ENCODE measurements at regions of chr4 and their contacts with region 1.

Region 1: DNA sequence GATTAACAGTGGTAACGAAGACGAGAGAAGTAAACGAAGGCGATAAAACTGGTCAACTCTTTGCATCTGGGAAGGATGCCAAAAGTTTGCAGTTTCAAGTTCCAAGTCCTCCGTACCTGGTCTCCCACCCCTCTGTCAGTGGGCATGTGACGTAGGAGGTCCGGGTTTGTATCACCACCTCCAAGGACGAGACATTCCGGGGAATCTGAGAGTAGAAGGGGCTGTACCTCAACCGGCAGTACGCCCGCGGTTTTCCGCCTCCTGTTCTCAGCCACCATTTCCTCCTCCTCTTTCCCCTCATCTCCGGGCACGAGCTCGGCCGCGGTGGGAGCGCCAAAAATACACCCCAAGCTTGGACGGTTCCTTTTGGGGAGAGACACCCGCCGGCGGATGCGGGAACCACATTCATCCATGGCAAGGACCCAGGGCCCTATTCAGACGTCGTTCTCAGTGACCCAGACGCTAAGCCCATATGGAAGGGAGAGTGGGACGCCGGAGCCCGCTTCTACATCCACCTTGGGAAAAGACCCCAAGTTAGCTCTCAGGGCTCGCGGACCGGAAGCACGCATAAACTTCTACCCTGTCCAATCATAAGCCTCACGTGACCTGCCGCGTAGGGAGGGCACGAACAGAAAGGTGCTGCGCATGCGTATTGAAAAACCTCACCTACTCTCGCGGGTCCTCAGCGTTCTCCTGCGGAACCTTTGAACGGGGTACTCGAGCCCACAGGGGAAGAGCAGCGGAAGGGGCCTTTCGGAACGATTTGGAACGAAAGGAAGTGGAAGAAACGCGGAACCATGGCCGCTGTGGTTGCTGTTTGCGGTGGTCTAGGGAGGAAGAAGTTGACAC is at the starts of genes HELQ and MRPS18C:
- DNase-seq: peak; percentile 89
- ATAC-seq: peak; percentile 92
- H3K4me3 Mint-ChIP-seq: peak within 1 kb of the TSS; percentile 100
- H3K27ac Mint-ChIP-seq: peak within 1 kb of the TSS; percentile 100
- H3K4me1 Mint-ChIP-seq: peaks cover 37% of the 10 kb centered on the region
- H3K27me3 Mint-ChIP-seq: no peaks in the 10 kb centered on the region
- total RNA-seq, gene HELQ: 27.4 to 28.7 TPM
- total RNA-seq, gene MRPS18C: 53.6 to 60.4 TPM

Region 2: GRCh38 chr4:83150653-83151330 is 304.7 kb before region 1 on chr4:
- POLR2A ChIA-PET with region 1: no interaction called
- DNase-seq: no peak
- ATAC-seq: no peak
- H3K4me3 Mint-ChIP-seq: no peak overlapping the region
- H3K27ac Mint-ChIP-seq: no peak overlapping the region
- H3K4me1 Mint-ChIP-seq: peaks cover 22% of the 10 kb centered on the region
- H3K27me3 Mint-ChIP-seq: no peaks in the 10 kb centered on the region

Region 3: GRCh38 chr4:83387753-83388676 is 67.5 kb before region 1 on chr4:
- POLR2A ChIA-PET with region 1: no interaction called
- DNase-seq: no peak
- ATAC-seq: peak; percentile 98
- H3K4me3 Mint-ChIP-seq: peak overlapping the region; percentile 31
- H3K27ac Mint-ChIP-seq: peak overlapping the region; percentile 75
- H3K4me1 Mint-ChIP-seq: peaks cover 9% of the 10 kb centered on the region
- H3K27me3 Mint-ChIP-seq: peaks cover 6% of the 10 kb centered on the region

Region 4: GRCh38 chr4:83484500-83485461 is 29.3 kb after region 1 on chr4 and contains the start of gene ABRAXAS1:
- POLR2A ChIA-PET with region 1: interaction called, 14 read pairs
- DNase-seq: peak; percentile 98
- ATAC-seq: peak; percentile 97
- H3K4me3 Mint-ChIP-seq: peak within 1 kb of the TSS; percentile 99
- H3K27ac Mint-ChIP-seq: peak within 1 kb of the TSS; percentile 98
- H3K4me1 Mint-ChIP-seq: peaks cover 15% of the 10 kb centered on the region
- H3K27me3 Mint-ChIP-seq: no peaks in the 10 kb centered on the region
- total RNA-seq, gene ABRAXAS1: 20.1 to 21.7 TPM